AG04449 (cell line): ENCODE measurements at regions of chr1 and their contacts with region 1.

Region 1: DNA sequence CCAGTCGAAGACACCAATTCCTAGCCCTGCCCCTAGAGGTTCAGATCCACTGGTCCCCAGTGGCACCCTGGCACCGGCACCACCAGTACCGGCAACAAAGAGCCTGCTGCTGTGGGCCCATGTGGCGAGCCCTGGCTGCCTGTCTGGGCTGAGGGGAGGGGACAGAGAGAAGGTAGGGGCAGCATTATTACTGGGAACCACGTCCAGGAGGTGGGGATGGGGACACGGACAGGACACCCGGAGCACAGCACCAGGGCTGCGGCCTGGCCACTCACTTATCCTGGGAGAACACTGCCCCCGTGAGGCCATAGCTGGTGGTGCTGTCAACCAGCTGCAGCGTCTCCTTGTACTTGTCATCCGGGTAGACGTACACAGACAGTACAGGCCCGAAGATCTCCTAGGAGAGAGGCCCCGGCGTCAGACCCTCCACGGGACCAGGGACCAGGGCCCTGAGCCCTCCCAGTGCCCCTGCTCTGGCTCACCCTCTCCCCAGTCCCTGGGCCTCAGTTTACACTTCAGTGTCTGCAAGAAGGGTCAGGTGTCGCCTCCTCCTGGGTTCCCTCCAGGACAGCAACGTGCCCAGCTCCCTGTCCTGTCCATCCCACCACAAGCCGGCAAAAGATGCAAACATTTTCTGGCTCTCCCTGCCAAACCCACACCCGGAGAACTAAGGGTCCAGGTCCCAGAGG is 15.8 kb upstream of the TAS1R2 start:
- DNase-seq: peak; percentile 34
- H3K4me3 ChIP-seq: no peak overlapping the region
- CTCF ChIP-seq: peak; percentile 97

Region 2: DNA sequence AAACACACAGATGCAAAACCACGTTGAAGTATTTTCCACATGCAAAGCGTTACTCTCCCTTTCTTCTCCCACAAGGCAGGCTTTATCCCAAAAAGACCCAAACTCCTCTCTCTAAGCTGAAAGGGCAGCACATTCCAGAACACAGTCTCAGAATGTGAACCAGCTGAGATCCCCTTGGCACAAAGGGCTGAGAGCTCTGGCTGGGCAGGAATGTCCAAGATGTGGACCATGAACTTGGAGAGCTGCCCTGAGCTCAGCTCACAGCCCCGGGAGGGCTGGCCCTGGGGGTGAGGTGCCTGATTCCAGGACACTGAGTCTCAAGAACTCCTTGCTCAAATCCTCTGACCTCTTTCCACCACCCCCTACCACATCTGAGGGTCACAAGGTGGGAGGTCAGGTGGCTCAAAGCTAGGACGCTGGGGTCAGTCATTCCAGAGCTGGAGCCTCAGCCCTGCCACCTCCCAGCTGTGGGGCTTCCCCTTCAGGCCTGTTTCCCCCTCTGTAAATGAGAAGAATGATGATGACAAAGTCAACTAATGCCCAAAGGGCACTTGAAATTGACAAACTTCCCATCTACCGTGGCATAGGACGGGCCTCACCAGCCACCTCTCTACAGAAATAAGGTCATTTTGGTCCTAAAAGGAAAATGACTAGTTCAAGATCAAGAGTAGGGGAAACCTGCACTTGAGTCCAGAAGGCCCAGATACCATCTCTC is 15.6 kb after region 1 on chr1:
- CTCF ChIA-PET with region 1: interaction called, 95 read pairs
- POLR2A ChIA-PET with region 1: no interaction called
- DNase-seq: no peak
- H3K4me3 ChIP-seq: no peak overlapping the region
- CTCF ChIP-seq: no peak

Region 3: DNA sequence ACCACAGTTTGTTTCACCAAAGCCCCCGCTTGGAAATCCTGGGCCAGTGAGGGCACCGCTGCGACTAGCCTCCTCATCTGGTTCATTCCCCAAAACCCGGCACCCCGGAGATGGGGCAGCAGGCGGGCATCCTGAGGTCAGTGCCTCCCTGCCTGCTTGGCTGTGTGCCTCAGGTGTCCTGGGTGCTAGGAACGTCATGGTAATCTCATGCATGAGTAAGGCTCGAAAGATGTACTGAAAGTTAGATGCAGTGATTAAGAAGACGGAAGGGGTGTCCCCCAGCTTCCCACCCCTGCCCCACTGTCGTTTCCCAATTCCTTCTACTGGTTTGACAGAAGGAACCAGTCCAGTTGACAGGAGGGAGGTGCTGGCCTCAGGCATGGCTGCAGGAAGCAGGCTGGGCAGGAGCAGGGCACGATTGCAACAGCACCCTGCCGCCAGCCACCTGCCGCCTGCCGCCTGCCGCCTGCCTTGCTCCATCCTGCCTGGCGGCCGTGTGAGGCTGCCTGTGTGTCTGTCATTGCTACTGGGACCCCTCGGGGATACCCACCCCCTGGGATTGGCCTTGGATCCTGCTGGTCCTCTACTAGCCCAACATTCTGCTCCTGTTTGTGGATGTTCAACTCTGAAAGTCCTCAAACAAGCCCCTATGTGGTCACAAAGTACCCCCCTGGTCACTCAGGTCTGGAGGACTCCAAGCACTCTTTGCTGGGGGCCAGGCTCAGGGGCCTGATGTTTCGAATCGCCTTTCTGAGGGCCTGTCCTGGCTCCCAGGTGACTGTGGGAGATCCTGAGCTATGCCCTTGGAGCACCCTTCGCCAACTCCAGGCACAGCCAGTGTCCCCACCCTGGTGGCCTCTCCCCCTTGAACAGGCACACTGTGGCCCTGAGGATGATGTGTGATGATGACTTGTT is 154.2 kb after region 1 on chr1:
- CTCF ChIA-PET with region 1: no interaction called
- POLR2A ChIA-PET with region 1: no interaction called
- DNase-seq: no peak
- H3K4me3 ChIP-seq: no peak overlapping the region
- CTCF ChIP-seq: no peak